ENCODE measurements at regions of chr20 and their contacts with region 1.

Region 1: DNA sequence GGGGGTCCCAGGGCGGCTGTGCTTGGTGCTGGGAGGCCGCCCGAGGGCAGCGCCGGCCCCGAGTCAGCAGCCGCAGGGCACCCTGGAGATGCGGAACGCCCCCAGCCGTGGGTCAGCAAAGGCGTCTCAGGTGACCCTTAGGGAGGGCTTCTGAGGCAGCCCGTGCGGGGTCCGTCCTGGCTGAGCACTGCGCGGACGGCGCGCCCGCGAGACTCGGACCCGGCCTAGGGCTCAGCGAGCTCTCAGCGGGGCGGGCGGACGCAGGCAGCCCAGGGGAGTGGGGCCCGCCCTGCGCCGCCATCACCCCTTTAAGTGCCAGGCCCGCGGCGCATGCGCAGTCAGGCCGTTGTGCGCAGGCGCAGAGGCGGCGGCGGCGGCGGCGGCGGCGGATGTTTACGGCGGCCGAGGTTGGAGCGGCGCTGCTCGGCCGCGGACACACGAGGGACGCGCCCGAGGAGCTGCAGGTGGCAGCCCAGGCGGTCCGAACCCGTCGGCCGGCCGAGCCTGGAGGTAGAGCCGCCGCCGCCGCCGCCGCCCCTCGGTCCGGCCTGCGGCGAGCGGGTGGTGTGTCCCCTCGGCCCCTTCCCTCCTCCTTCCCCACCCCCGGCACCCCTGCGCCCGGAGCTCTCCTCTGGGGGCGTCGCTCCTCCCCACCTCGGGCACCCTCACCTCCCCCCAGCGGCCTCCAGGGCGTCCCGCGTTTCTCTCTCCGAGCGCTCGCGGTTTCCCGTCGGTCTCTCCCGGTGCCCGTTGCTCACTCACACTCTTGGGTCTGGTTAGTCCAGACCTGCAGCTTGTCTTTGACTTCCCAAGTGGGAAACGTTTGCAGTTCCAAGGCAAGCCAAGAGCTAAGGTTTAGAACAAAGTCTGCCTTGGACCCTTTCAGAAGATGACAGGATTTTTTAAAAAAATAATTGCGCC is at the start of gene PCMTD2:
- DNase-seq: peak; percentile 50 to 74
- ATAC-seq: peak; percentile 91 to 95
- H3K4me3 ChIP-seq: peak within 1 kb of the TSS; percentile 78 to 98 (median 90)
- H3K27ac ChIP-seq: peak within 1 kb of the TSS; percentile 84 to 96 (median 94)
- H3K4me1 ChIP-seq: peaks cover 37 to 41% of the 10 kb centered on the region in 2 donors
- H3K27me3 ChIP-seq: no peaks in the 10 kb centered on the region
- CTCF ChIP-seq: peak in 2 of 5 experiments; percentile 23 to 25
- POLR2A ChIP-seq: peak; percentile 65 to 74
- total RNA-seq, gene PCMTD2: 51.3 to 96.9 (median 75.4) TPM

Region 2: DNA sequence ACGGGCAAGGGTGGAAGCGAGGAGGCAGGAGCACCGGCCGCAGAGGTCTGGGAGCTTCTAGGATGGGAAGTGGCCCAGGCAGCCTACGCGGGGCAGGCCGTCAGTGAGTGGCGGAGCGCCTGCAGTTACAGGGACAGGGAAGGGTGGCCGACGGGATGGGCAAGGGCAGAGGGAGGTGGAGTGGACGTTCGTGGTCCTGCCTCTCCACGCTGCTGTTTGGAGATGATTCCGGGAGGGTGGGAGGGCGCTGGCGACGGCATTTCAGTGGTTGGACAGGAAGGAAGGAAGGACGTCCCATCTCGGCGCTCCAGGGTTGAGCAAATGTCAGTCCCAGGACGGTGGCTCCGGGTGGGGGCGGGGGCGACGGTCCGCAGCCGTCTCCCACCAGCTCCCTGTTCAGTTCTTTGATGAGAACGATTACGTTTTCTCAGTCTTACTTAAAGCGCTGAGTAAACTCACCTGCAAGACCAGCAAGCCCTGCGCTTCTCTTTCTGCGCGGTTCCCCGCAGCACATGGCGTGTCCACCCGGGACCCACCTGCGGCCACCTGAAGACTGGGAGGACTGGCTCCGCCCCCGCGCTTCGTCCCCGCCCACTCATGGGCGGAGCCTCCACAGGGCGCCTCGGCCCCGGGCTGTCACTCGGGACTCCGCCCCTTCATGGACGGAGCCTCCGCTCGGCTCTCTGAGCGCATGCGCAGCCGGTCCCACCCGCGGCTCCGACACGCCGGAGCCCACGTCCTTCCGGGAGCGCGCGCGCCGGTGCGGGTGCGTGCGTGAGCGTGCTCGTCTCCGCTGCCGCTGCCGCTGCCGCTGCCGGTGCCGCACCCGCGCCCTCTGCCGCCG is 361.0 kb before region 1 on chr20 and contains the start of gene DNAJC5:
- in situ Hi-C with region 1: no loop called
- intact Hi-C with region 1: no loop called
- DNase-seq: peak; percentile 91 to 94
- ATAC-seq: peak; percentile 90 to 92
- H3K4me3 ChIP-seq: peak within 1 kb of the TSS; percentile 63 to 66 (median 65)
- H3K27ac ChIP-seq: peak within 1 kb of the TSS; percentile 58 to 86 (median 78)
- H3K4me1 ChIP-seq: peaks cover 21 to 23% of the 10 kb centered on the region in 2 donors
- H3K27me3 ChIP-seq: no peaks in the 10 kb centered on the region
- CTCF ChIP-seq: no peak
- POLR2A ChIP-seq: peak; percentile 76 to 82
- total RNA-seq, gene DNAJC5: 18.5 to 26.4 (median 22.5) TPM

Region 3: GRCh38 chr20:64223526-64224067 is 32.0 kb before region 1 on chr20:
- in situ Hi-C with region 1: no loop called
- intact Hi-C with region 1: loop called (anchors 2 kb)
- DNase-seq: peak in 1 of 2 donors; percentile 24
- ATAC-seq: peak; percentile 39 to 61
- H3K4me3 ChIP-seq: no peak overlapping the region
- H3K27ac ChIP-seq: no peak overlapping the region
- H3K4me1 ChIP-seq: peaks cover 18 to 21% of the 10 kb centered on the region in 2 donors
- H3K27me3 ChIP-seq: no peaks in the 10 kb centered on the region
- CTCF ChIP-seq: peak in 3 of 5 experiments; percentile 23 to 47 (median 35)
- POLR2A ChIP-seq: no peak